Activated CD8-positive, alpha-beta memory T cell treated with anti-CD3 and anti-CD28 coated beads, Interleukin-2, amount 10 ng/mL, durations not matched to agents 7 days and 5 days (primary cell): ENCODE measurements at regions of chrX and their contacts with region 1.

Region 1: DNA sequence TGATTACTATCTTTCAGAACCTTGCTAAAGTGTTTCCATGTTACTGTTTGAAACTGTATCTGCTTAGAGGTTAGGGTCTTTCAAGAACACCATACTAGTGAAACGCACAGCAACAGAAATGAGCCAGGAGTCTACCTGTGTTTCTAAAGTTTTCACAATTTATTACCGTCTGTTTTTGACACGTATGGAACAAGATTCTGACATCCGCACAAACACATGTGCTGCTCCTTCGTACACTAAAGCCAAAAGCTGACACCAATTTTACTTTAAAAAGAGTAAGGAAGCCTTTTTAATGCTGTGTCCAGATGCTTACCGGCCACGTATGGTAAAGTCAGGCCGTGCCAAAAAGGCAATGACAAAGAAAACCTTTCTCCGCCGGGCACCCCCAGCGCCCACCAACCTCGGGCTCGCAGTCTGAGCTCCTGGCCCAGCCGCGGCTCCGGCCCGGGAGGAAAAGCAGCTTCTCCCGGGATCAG is 532 bp downstream of the RPS4X start:
- DNase-seq: no peak
- ATAC-seq: no peak
- H3K4me3 Mint-ChIP-seq: peak overlapping the region; percentile 83
- H3K27ac Mint-ChIP-seq: peak overlapping the region; percentile 86
- H3K4me1 Mint-ChIP-seq: peaks cover 43% of the 10 kb centered on the region
- H3K27me3 Mint-ChIP-seq: peaks cover 18% of the 10 kb centered on the region

Region 2: DNA sequence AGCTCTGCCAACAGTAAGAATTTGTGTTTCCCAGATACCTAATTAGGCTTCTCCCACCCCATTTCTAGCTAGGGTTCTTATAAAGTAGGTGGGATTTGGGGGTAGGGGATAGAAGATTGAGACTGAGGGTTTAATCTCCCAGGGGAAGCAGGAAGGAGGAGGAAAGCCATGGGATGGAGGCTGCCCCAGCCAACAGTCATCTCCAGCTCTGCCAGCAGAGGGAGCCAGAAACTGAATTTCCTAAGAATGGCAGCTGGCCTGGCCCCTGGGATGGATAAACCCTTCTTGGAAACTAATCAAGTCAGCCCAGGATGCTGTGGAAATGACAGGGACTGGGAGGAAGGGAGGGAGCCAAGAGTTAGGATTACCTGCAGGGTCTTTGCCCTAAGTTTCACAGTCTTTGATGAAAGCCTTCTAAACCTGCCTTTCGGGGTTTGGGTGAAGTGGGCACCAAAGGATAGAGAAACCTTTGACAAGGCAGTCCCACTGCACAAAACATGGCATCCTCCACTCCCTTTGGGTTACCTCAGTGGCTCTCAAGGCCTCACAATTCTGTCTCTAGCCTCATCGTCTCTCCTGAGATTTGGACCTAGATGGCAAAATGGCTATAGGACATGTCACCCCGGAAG is 30.9 kb before region 1 on chrX:
- CTCF ChIA-PET with region 1: interaction called, 19 read pairs
- DNase-seq: peak; percentile 45
- ATAC-seq: no peak
- H3K4me3 Mint-ChIP-seq: no peak overlapping the region
- H3K27ac Mint-ChIP-seq: no peak overlapping the region
- H3K4me1 Mint-ChIP-seq: peaks cover 3% of the 10 kb centered on the region
- H3K27me3 Mint-ChIP-seq: no peaks in the 10 kb centered on the region